GM12878 (cell line): ENCODE measurements at regions of chr10 and their contacts with region 1.

Region 1: DNA sequence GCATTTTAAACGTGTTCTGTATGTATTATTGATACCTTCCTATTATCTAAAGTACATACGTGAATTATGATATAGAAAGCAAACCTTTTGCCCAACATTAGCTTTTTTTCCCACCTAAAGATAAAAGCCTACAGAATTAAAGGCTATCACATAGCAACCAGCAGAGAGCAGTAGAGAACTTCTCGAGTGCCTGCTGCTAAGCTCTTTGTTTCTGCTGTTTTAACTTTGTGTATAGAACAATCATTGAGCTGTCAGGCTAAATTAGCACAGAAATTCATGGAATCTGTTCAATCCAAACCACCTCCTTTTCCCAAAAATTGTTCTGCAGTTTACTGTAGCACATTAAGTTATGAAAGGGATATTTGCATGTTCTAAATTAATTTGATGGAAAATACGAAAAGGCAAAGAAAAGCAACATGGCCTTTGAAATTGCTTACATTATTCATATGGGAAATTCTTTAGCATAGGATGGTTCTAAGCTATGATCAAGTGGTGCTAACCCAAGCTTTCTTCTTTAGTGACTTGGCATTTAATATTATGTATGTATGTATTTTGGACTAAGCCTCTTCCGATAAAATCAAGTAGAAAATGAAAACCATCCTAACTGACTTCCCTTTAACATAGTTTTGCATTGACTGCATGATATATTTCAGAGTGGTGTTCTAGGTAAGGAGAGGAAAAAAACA is 1288.5 kb downstream of the GATA3 start:
- DNase-seq: no peak
- ATAC-seq: peak; percentile 68
- H3K4me3 ChIP-seq: no peak overlapping the region
- H3K27ac ChIP-seq: no peak overlapping the region
- H3K4me1 ChIP-seq: no peaks in the 10 kb centered on the region
- H3K27me3 ChIP-seq: no peaks in the 10 kb centered on the region
- CTCF ChIP-seq: peak; percentile 52 to 60 (median 57); a peak in 5 of 6 replicates
- EP300 ChIP-seq: no peak
- POLR2A ChIP-seq: no peak
- RAD21 ChIP-seq: peak; percentile 78

Region 2: GRCh38 chr10:9243941-9244411 is 99.1 kb before region 1 on chr10:
- CTCF ChIA-PET with region 1: no interaction called
- POLR2A ChIA-PET with region 1: no interaction called
- RAD21 ChIA-PET with region 1: no interaction called
- SMC1A ChIA-PET with region 1: no interaction called
- in situ Hi-C with region 1: no loop called
- intact Hi-C with region 1: no loop called
- DNase-seq: no peak
- ATAC-seq: no peak
- H3K4me3 ChIP-seq: no peak overlapping the region
- H3K27ac ChIP-seq: no peak overlapping the region
- H3K4me1 ChIP-seq: no peaks in the 10 kb centered on the region
- H3K27me3 ChIP-seq: no peaks in the 10 kb centered on the region
- CTCF ChIP-seq: no peak
- EP300 ChIP-seq: no peak
- POLR2A ChIP-seq: no peak
- RAD21 ChIP-seq: no peak

Region 3: GRCh38 chr10:9331583-9332008 is 11.4 kb before region 1 on chr10:
- CTCF ChIA-PET with region 1: interaction called, 17 read pairs
- POLR2A ChIA-PET with region 1: no interaction called
- RAD21 ChIA-PET with region 1: interaction called, 3 read pairs
- SMC1A ChIA-PET with region 1: interaction called, 3 read pairs
- in situ Hi-C with region 1: no loop called
- intact Hi-C with region 1: no loop called
- DNase-seq: no peak
- ATAC-seq: peak; percentile 79
- H3K4me3 ChIP-seq: no peak overlapping the region
- H3K27ac ChIP-seq: no peak overlapping the region
- H3K4me1 ChIP-seq: no peaks in the 10 kb centered on the region
- H3K27me3 ChIP-seq: no peaks in the 10 kb centered on the region
- CTCF ChIP-seq: peak; percentile 59 to 78 (median 66)
- EP300 ChIP-seq: no peak
- POLR2A ChIP-seq: no peak
- RAD21 ChIP-seq: peak; percentile 78

Region 4: GRCh38 chr10:9362721-9363120 is 19.7 kb after region 1 on chr10:
- CTCF ChIA-PET with region 1: no interaction called
- POLR2A ChIA-PET with region 1: no interaction called
- RAD21 ChIA-PET with region 1: no interaction called
- SMC1A ChIA-PET with region 1: no interaction called
- in situ Hi-C with region 1: no loop called
- intact Hi-C with region 1: no loop called
- DNase-seq: no peak
- ATAC-seq: no peak
- H3K4me3 ChIP-seq: no peak overlapping the region
- H3K27ac ChIP-seq: no peak overlapping the region
- H3K4me1 ChIP-seq: no peaks in the 10 kb centered on the region
- H3K27me3 ChIP-seq: no peaks in the 10 kb centered on the region
- CTCF ChIP-seq: no peak
- EP300 ChIP-seq: no peak
- POLR2A ChIP-seq: no peak
- RAD21 ChIP-seq: no peak

Region 5: DNA sequence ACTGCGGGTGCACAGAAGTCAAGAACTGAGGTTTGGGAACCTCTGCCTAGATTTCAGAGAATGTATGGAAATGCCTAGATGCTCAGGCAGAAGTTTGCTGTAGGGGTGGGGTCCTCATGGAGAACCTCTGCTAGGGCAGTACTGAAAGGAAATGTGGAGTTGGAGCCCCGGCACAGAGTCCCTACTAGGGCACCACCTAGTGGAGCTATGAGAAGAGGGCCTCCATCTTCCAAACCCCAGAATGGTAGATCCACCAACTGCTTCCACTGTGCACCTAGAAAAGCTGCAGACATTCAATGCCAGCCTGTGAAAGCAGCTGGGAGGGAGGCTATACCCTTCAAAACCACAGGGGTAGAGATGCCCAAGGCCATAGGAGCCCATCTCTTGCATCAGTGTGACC is 338.6 kb after region 1 on chr10:
- CTCF ChIA-PET with region 1: interaction called, 4 read pairs
- POLR2A ChIA-PET with region 1: no interaction called
- RAD21 ChIA-PET with region 1: no interaction called
- SMC1A ChIA-PET with region 1: no interaction called
- in situ Hi-C with region 1: no loop called
- intact Hi-C with region 1: loop called (anchors 2 kb)
- DNase-seq: no peak
- ATAC-seq: no peak
- H3K4me3 ChIP-seq: no peak overlapping the region
- H3K27ac ChIP-seq: no peak overlapping the region
- H3K4me1 ChIP-seq: no peaks in the 10 kb centered on the region
- H3K27me3 ChIP-seq: no peaks in the 10 kb centered on the region
- CTCF ChIP-seq: peak; percentile 15 to 35 (median 20); a peak in 1 of 6 replicates
- EP300 ChIP-seq: no peak
- POLR2A ChIP-seq: no peak
- RAD21 ChIP-seq: peak; percentile 36; the same call in 1 of the 2 replicates

Region 6: DNA sequence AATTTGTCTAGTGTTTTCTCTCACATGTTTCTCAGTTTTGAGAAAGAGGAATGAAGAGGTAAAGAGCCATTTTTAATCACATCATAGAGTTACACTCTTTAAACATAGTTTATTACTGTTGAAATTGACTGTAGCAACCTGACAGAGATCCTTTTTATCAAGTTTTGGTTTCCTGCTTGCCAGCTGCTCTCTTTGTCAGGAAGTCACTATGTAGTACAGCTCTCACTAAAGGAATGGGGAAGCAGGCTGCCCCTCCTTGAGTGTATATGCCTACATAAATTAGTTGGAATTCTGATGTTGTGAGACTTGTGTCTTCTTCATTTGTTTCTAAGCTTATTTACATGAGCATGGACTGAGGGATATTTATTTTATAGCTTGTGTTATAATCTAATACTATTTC is 400.6 kb after region 1 on chr10:
- CTCF ChIA-PET with region 1: interaction called, 4 read pairs
- POLR2A ChIA-PET with region 1: no interaction called
- RAD21 ChIA-PET with region 1: no interaction called
- SMC1A ChIA-PET with region 1: interaction called, 4 read pairs
- in situ Hi-C with region 1: no loop called
- intact Hi-C with region 1: loop called (anchors 5 kb)
- DNase-seq: no peak
- ATAC-seq: no peak
- H3K4me3 ChIP-seq: no peak overlapping the region
- H3K27ac ChIP-seq: no peak overlapping the region
- H3K4me1 ChIP-seq: no peaks in the 10 kb centered on the region
- H3K27me3 ChIP-seq: no peaks in the 10 kb centered on the region
- CTCF ChIP-seq: no peak
- EP300 ChIP-seq: no peak
- POLR2A ChIP-seq: no peak
- RAD21 ChIP-seq: no peak

Region 7: DNA sequence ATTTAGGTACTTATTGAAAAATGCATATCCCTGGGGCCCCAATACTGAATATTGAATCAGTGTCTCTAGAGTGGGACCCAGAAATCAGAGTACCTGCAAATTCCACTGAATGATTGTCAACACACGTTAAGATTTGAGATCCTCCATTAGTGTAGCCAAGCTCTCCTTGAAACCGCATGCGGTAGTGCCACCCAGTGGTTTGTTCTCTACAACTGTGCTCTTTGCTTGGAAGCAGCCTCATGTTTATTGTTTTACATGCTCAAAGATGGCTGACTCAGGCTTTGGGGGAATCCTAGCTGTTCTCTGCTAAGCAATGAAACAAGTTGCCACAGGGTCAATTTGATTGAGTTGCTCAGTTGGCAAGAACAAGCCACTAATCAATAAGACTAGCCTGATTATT is 1334.5 kb after region 1 on chr10:
- CTCF ChIA-PET with region 1: interaction called, 11 read pairs
- POLR2A ChIA-PET with region 1: no interaction called
- RAD21 ChIA-PET with region 1: interaction called, 5 read pairs
- SMC1A ChIA-PET with region 1: no interaction called
- in situ Hi-C with region 1: no loop called
- intact Hi-C with region 1: no loop called
- DNase-seq: peak; percentile 11
- ATAC-seq: peak; percentile 83
- H3K4me3 ChIP-seq: no peak overlapping the region
- H3K27ac ChIP-seq: no peak overlapping the region
- H3K4me1 ChIP-seq: 0 out of 2 replicates have a peak, but pooled peaks cover 5% of the 10 kb centered on the region
- H3K27me3 ChIP-seq: no peaks in the 10 kb centered on the region
- CTCF ChIP-seq: peak in 2 of 3 experiments; percentile 47 to 51; a peak in 4 of 6 replicates
- EP300 ChIP-seq: no peak
- POLR2A ChIP-seq: no peak
- RAD21 ChIP-seq: peak; percentile 73